ENCODE measurements at regions of chr5 and their contacts with region 1.

Region 1: DNA sequence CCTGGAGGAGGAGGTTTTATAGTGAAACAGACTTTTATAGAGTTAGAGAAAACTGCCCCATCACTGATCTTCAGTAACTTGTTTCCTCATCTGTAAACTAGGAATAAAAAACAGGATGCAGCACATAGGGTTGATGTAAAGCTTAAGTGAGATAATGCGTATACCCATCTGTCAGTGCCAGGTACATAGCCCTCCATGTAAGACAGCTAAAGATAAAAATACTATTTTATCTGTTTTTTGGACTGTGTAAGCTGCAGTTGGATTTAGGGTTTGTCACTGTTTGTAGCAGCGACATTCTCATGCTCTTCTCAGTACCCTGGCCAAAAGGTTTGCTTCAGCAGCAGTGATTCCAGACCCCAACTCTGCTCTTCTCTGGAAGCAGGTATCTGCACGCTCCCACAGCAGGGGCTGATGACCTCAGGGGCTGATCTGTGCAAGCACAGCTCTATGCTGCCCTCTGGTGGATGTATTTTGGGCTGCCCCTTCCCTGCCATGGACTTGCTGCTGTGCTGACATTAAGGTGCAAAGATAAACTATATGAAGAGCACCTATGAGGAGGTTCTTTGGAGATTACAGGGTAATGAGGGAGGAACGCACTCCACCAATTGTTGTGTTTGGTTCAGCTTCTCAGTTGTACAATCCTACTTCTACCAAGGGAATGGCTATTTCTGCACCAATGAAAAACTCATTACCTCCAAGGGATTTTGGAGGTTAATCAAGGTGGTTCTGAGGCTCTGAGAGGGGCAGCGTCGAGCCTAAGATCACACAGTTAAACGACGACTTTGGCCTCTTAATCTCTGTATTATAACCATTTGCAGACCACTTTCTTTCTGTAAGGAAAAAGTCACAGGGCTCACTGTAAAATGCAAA is 13.1 kb downstream of the HMHB1 start:
- DNase-seq: peak; percentile 32 to 71 (median 65)
- H3K4me3 ChIP-seq: no peak overlapping the region
- H3K27ac ChIP-seq: no peak overlapping the region
- H3K4me1 ChIP-seq: no peaks in the 10 kb centered on the region
- H3K27me3 ChIP-seq: no peaks in the 10 kb centered on the region
- CTCF ChIP-seq: peak; percentile 27 to 49 (median 48)
- EP300 ChIP-seq: no peak
- POLR2A ChIP-seq: no peak

Region 2: DNA sequence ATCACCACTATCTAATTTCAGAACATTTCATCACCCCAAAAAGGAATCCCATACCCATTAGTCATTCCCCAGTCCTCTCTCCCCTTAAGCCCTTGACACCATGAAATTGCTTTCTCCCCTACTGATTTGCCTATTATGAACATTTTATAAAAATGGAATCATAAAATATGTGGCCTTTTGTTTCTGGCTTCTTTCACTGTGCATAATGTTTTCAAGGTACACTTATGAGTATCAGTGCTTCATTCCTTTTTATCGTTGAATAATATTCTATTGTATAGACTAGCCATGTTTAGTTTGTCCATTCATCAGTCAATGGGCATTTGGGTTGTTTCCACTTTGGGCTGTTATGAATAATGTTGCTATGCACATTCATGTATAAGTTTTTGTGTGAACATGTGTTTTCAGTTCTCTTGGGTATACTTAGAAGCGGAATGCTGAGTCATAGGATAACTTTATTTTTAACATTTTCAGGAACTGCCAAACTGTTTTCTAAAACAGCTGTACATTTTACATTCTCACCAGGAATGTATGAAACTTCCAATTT is 1098.8 kb before region 1 on chr5:
- intact Hi-C with region 1: loop called in 1 of 4 experiments (anchors 10 kb)
- DNase-seq: no peak
- H3K4me3 ChIP-seq: no peak overlapping the region
- H3K27ac ChIP-seq: no peak overlapping the region
- H3K4me1 ChIP-seq: no peaks in the 10 kb centered on the region
- H3K27me3 ChIP-seq: no peaks in the 10 kb centered on the region
- CTCF ChIP-seq: no peak
- EP300 ChIP-seq: no peak
- POLR2A ChIP-seq: no peak

Region 3: GRCh38 chr5:142922223-142922952 is 902.7 kb before region 1 on chr5:
- intact Hi-C with region 1: loop called in 2 of 4 experiments (anchors 5 to 10 kb)
- DNase-seq: no peak
- H3K4me3 ChIP-seq: no peak overlapping the region
- H3K27ac ChIP-seq: no peak overlapping the region
- H3K4me1 ChIP-seq: no peaks in the 10 kb centered on the region
- H3K27me3 ChIP-seq: no peaks in the 10 kb centered on the region
- CTCF ChIP-seq: peak in 2 of 3 donors; percentile 47 to 49
- EP300 ChIP-seq: no peak
- POLR2A ChIP-seq: no peak

Region 4: DNA sequence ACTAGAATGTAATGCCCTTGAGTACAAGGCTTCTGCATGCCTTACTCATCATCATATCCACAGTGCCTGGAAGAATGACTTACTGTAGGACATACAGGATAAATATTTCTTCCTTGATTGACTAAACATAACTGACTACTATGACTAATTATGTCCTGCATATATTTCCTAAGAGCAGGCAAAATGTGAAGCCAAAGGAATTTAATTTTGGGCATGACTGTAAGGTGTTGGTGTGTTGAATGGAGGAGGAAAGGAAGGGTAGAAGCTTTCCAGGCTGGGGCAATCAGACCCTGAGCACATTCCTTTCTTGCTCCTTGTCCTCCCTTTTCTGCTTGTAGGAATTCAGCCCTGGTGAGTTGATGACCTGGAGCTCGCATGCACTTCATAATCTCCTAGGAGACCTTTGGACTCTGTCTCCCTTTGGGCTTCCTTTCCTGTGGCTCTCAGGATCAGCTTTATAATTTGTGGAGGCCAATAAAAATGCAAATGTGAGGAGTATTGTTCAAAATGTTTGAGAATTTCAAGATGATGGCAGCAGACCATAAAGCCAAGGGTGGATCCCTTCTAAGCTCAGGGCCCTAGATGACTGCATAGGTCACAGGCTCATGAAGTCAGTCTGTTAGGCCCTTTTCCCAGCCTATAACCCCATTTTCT is 160.9 kb after region 1 on chr5:
- intact Hi-C with region 1: no loop called
- DNase-seq: no peak
- H3K4me3 ChIP-seq: no peak overlapping the region
- H3K27ac ChIP-seq: no peak overlapping the region
- H3K4me1 ChIP-seq: no peaks in the 10 kb centered on the region
- H3K27me3 ChIP-seq: no peaks in the 10 kb centered on the region
- CTCF ChIP-seq: no peak
- EP300 ChIP-seq: no peak
- POLR2A ChIP-seq: no peak